Ovary (tissue), 10 donors: ENCODE measurements at regions of chr1 and their contacts with region 1.

Region 1: DNA sequence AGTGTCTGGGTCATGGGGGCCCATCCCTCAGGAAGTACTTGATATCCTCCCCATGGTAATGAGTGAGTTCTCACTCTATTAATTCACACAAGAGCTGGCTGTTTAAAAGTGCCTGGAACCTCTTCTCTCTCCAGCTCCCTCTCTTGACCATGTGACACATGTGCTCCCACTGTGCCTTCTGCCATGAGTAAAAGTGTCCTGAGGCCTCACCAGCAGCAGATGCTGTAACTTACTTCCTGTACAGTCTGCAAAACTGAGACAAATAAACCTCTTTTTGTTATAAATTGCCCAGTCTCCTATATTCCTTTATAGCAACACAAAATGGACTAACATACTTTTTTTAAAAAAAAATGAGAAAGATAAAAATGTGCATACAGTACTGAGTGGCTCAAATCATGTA is 24.0 kb downstream of the PUM1 start:
- DNase-seq: no peak
- H3K4me3 ChIP-seq: no peak overlapping the region
- H3K27ac ChIP-seq: no peak overlapping the region
- H3K4me1 ChIP-seq: peaks cover 5% of the 10 kb centered on the region
- H3K27me3 ChIP-seq: no peaks in the 10 kb centered on the region
- CTCF ChIP-seq: no peak
- EP300 ChIP-seq: no peak
- POLR2A ChIP-seq: no peak

Region 2: DNA sequence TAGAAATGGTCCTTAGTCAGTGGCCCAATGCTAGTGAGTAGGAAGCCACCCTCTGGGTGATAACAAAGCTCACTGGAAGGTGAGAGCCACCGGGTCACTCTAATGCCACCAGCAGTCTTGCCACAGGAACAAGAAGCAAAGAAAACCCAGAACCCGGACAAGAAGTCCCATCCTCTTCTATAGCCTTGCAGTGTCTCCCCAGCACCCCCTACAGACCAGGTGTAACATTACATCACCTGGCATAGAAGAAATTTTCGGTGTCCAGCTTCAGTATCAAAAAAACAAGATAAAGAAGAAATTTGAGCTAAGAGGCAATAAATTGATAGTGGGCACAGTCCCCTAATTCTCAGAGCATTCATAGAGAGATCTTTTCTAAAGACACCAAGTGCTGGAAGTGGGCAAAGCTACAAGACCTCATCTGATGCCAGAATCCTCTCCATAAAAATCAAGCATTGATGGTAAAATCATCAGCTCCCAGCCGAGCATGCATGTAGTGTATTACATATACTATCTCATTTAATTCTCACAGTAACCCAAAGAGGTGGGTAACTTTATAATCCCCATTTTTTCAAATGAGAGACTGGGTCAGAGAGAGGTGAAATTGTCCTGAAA is 809.1 kb before region 1 on chr1:
- intact Hi-C with region 1: no loop called
- DNase-seq: no peak
- H3K4me3 ChIP-seq: no peak overlapping the region
- H3K27ac ChIP-seq: no peak overlapping the region
- H3K4me1 ChIP-seq: no peaks in the 10 kb centered on the region
- H3K27me3 ChIP-seq: no peaks in the 10 kb centered on the region
- CTCF ChIP-seq: no peak
- EP300 ChIP-seq: no peak
- POLR2A ChIP-seq: no peak

Region 3: DNA sequence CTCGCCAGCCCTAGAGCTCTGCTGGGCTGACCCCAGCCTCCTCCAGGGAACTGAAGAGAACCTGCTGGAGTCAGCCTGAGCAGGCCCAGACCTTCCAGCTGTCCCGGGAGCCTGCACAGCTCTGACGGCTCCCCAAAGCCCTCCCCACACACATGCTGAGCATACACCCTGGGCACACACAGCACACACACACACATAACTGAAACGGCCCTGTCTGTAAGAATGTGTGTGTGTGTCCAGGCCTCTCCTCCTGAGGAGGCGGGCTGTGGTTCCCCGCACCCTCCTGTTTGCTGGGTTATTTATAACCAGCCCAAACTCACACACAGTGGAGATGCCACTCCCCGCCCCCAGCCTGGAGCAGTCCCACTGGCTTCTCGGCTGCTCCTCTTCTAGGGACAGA is 153.1 kb before region 1 on chr1:
- intact Hi-C with region 1: no loop called
- DNase-seq: peak; percentile 58 to 74 (median 63)
- H3K4me3 ChIP-seq: no peak overlapping the region
- H3K27ac ChIP-seq: peak overlapping the region; percentile 44 to 49
- H3K4me1 ChIP-seq: peaks cover 7% of the 10 kb centered on the region
- H3K27me3 ChIP-seq: no peaks in the 10 kb centered on the region
- CTCF ChIP-seq: no peak
- EP300 ChIP-seq: no peak
- POLR2A ChIP-seq: no peak

Region 4: GRCh38 chr1:30991862-30992606 is 49.5 kb before region 1 on chr1:
- intact Hi-C with region 1: loop called in 1 of 4 experiments (anchors 10 kb)
- DNase-seq: no peak
- H3K4me3 ChIP-seq: no peak overlapping the region
- H3K27ac ChIP-seq: no peak overlapping the region
- H3K4me1 ChIP-seq: peaks cover 9% of the 10 kb centered on the region
- H3K27me3 ChIP-seq: no peaks in the 10 kb centered on the region
- CTCF ChIP-seq: no peak
- EP300 ChIP-seq: no peak
- POLR2A ChIP-seq: no peak

Region 5: DNA sequence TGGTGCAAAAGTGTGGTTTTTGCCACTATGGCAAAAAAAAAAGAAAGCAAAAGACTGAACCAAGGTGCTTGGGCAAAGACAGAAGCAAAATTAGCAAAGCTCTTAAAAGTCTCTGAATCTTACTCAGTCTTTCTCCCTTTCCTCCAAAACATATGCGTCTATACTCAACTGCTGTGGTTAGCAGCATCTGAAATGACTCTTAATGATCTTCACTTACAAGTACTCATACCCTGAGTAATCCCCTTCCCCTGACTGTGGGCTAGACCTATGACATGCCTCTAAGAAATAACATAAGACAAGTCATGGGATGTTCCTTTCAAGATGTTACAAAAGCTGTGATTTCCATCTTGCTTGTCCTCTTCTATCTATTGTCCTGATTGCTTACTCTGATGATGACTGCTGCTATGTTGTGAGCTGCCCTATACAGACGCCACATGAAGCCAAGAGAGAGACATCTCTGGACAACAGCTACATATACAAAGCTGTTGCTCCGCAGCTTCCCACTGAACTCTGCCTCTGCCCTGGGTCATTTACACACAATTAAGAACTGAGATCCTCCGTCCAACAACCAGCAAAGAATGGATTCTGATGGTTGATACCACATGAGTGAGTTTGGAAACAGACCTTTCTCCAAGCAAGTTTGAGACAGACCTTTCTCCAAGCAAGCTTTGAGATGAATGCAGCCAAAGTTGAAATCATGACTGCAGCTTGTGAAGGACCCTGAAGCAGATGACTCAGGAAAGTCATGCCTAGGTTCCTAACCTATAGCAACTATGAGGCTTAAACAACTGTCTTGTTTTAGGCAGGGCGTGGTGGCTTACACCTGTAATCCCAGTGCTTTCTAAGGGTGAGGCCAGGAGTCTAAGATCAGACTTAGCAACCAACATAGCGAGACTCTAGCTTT is 31.2 kb before region 1 on chr1:
- intact Hi-C with region 1: no loop called
- DNase-seq: no peak
- H3K4me3 ChIP-seq: no peak overlapping the region
- H3K27ac ChIP-seq: no peak overlapping the region
- H3K4me1 ChIP-seq: peaks cover 8% of the 10 kb centered on the region
- H3K27me3 ChIP-seq: no peaks in the 10 kb centered on the region
- CTCF ChIP-seq: no peak
- EP300 ChIP-seq: no peak
- POLR2A ChIP-seq: no peak

Region 6: DNA sequence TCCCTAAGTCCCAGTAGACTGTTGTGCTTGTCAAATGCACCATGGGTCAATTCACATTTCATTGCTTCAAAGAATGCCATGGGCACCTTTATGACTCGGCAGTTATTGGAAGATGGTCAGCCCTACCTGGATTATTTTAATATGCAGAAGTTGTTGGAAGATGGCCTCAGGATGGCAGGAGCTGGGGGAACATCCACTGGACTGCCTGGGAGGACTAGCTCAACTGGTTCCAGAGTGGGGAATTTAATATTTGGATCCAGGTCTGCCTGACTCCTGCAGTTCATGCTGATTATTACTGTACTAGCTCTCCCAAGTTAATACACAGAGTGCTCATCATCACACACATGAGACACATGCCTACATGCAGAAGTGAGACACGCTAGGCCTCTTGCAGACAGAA is 133.0 kb after region 1 on chr1:
- intact Hi-C with region 1: no loop called
- DNase-seq: no peak
- H3K4me3 ChIP-seq: no peak overlapping the region
- H3K27ac ChIP-seq: no peak overlapping the region
- H3K4me1 ChIP-seq: peaks cover 3% of the 10 kb centered on the region
- H3K27me3 ChIP-seq: no peaks in the 10 kb centered on the region
- CTCF ChIP-seq: no peak
- EP300 ChIP-seq: no peak
- POLR2A ChIP-seq: no peak